Posterior cingulate gyrus (tissue), 11 donors: ENCODE measurements at regions of chr11 and their contacts with region 1.

Region 1: GRCh38 chr11:75896843-75897419 is 81.9 kb downstream of the UVRAG start:
- DNase-seq: no peak

Region 2: GRCh38 chr11:76152086-76152681 is 255.3 kb after region 1 on chr11:
- intact Hi-C with region 1: loop called (anchors 1 kb)
- DNase-seq: peak; percentile 65 to 97 (median 87)

Region 3: DNA sequence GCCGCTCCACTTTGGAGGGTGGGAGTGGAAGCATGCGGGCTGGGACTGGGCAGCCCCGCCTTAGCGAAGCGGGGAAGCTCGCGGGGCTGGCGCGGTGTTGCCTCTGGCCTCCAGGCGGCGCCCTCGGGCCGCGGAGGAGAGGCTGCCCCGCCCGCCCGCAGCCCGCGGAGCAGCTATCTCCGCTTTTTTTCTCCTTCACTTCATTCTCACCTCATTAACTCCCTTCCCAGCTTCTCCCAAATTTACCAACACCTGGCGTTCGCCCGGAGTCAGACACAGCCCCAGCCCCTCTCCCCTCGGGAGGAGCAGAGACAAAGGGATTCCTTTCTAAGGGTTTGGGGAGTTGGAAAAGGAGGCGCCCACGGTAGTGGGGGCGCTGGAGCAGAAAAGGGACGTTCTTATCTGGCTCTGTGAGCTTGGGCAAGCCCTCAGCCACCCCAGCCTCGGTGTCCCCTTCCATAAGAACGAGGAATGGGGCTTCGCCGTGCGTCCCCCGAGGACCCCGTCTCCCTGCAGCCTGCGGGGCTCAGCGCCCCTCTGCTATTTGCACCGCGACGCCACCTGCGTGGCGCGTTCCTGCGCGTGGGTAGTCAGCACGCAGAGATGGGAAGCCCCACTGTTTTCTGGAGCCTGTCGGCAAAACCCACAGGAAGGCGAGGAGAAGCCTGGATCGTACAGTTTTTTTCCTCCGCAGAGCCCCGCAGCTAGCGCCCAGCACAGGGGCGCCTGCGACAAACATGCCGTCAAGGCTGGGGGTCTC is 310.9 kb after region 1 on chr11:
- intact Hi-C with region 1: loop called (anchors 5 kb)
- DNase-seq: peak; percentile 43 to 96 (median 71)

Region 4: GRCh38 chr11:76237914-76238313 is 341.0 kb after region 1 on chr11:
- intact Hi-C with region 1: no loop called
- DNase-seq: no peak